Ovary (tissue), 10 donors: ENCODE measurements at regions of chr1 and their contacts with region 1.

Region 1: DNA sequence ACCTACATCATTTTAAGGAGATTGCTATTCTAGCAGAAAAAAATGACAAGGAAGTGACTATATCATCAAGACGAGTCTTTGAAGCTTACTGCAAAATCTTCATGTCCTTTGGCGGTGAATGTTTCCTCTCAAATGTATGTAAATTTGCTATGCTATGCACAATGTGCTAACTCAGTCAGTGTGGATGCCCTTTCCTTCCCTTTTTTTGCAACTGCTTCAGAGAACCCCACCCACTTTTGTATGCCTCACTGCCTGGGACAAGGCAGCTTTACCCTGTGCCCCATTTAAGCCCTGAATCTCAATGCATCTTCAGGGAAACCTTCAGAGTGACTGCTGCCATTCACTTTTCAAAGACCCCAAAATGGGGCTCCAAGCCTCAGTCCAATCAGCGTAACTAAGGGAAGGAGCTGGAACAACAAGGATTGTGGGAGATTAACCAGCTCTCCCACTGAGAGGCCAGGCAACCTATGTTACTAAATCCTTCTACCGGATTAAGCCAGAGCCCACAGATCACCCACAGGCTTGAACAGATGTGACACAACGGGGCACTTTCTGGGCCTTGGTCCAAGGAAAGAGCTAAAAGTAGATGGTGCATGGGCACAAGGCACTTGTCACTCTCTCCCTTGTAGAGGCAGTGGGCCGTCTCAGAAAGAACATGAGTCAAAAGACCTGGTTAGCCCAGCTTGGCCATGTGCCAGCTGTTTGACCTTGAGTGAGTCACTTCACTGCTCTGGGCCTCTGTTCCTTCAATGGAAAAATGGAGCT is 154.4 kb downstream of the PLPP3 start:
- DNase-seq: peak in 2 of 5 donors; percentile 18 to 46
- H3K4me3 ChIP-seq: no peak overlapping the region
- H3K27ac ChIP-seq: no peak overlapping the region
- H3K4me1 ChIP-seq: no peaks in the 10 kb centered on the region
- H3K27me3 ChIP-seq: no peaks in the 10 kb centered on the region
- CTCF ChIP-seq: no peak
- EP300 ChIP-seq: no peak
- POLR2A ChIP-seq: no peak

Region 2: DNA sequence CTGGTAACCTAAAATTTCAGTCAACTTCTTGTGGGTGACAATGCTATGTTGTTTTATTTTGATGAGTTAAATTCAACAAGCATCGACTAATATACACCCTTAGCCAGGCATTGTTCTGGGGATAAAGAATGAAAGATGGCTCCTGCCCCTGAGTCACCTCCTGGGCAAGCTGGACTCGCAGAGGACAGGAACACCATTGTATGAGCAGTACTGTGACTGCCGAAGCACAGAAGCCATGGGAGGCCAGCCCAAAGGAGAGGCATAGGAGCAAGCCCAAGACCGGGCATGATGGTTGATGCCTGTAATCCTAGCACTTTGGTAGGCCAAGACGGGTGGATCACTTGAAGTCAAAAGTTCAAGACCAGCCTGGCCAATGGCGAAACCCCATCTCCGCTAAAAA is 1566.4 kb after region 1 on chr1:
- intact Hi-C with region 1: loop called in 1 of 4 experiments (anchors 5 kb)
- DNase-seq: no peak
- H3K4me3 ChIP-seq: no peak overlapping the region
- H3K27ac ChIP-seq: no peak overlapping the region
- H3K4me1 ChIP-seq: no peaks in the 10 kb centered on the region
- H3K27me3 ChIP-seq: no peaks in the 10 kb centered on the region
- CTCF ChIP-seq: no peak
- EP300 ChIP-seq: no peak
- POLR2A ChIP-seq: no peak